ENCODE measurements at regions of chr10 and their contacts with region 1.

Region 1: GRCh38 chr10:99630439-99630838 is 10.2 kb upstream of the SLC25A28 start:
- DNase-seq: no peak

Region 2: GRCh38 chr10:99648717-99649116 is 18.3 kb after region 1 on chr10:
- intact Hi-C with region 1: no loop called
- DNase-seq: no peak

Region 3: DNA sequence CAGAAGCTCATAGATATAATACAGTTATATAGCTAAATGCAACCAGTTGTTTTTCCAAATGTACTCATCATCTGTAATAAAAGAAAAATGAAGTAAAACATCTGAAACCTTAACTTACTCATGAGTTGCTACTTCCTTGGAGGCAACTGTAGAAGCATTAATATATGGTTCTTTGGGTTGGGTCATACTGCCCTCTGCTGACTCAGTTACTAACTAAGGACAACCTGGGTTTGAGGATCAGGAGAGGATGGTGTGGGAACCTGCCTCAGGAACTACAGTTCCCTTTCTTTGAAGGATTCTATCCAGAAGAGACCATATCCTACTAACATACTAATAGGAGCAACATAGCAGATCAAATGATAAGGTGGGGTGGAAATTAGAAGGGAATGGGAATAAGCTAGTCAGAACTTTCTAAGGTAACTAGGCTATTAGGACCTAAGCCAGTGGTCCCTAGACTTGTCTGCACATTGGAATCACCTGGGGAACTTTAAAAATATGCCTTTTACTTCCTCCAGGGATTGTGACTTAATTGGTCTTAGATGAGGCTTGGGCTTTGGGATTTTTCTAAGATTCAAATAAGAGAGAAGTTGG is 80.8 kb after region 1 on chr10:
- intact Hi-C with region 1: loop called (anchors 2 kb)
- DNase-seq: no peak

Region 4: GRCh38 chr10:99966306-99966705 is 335.9 kb after region 1 on chr10:
- intact Hi-C with region 1: no loop called
- DNase-seq: no peak